HEK293T (cell line): ENCODE measurements at regions of chr6 and their contacts with region 1.

Region 1: DNA sequence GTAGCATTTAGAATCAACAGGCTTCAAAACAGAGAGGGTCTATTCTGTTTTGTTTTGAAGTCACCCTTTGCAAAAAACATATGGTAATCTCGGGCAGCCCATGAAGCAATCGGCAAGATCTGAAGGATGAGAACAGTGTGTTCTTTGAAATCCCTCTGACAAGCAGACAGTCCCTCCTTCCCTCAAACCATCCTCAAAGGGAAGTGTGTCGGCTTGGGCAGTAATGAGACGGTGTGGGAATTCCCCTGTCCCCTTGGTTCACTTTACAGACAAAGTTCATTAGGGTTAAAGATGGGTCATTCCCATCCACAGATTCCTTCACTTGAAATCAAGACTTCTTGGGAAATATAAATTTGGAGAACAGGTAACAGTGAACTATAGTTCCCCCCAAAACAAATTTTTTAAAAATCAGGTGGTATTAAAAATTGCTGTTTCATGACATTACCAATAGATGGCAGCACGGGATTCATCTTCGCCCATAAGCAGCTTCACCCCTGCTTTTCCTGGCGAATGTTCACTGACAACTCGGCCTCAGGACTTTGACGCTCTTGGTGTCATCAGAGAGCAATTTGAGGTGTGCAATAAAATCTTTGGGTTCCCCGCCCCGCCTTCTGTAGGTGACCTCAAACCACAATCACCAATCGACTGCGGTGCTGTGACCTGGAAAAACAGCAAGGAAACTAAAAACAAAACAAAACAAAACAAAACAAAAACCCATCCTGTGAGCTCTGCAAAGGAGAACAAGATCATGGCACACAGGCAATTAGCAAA is 159.3 kb upstream of the TNFAIP3 start:
- DNase-seq: peak; percentile 74

Region 2: GRCh38 chr6:137680705-137681346 is 26.9 kb before region 1 on chr6:
- CTCF ChIA-PET with region 1: no interaction called
- POLR2A ChIA-PET with region 1: no interaction called
- DNase-seq: no peak

Region 3: DNA sequence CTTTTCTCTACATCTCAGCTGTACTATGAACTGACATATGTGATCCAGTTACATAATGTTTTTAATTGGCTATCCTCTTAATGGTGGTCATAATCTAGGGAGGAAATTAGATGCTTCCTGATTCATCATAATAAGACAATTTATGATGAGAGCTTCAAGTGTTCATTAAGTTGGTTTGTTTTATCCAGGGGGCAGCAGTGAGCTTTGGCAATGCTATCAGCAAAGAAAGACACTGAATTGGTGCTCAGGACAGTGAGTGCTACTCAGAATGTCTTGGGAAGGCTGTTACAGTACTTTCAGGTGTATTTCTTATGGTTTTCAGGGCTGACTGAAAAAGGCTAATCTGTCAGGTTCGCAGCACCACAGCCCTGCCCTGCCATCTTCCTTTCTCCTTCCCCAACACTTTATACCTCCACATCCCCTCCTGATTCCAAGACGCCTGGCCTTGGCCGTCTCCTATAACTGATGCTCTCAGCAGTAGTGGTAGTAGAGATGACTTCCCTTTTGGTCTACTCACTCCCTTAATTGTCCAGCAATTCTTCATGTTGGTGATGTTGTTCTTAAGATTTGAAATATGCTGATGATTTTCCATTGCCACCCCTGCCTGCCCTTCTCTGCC is 92.3 kb after region 1 on chr6:
- CTCF ChIA-PET with region 1: interaction called, 12 read pairs
- POLR2A ChIA-PET with region 1: no interaction called
- DNase-seq: peak; percentile 56

Region 4: DNA sequence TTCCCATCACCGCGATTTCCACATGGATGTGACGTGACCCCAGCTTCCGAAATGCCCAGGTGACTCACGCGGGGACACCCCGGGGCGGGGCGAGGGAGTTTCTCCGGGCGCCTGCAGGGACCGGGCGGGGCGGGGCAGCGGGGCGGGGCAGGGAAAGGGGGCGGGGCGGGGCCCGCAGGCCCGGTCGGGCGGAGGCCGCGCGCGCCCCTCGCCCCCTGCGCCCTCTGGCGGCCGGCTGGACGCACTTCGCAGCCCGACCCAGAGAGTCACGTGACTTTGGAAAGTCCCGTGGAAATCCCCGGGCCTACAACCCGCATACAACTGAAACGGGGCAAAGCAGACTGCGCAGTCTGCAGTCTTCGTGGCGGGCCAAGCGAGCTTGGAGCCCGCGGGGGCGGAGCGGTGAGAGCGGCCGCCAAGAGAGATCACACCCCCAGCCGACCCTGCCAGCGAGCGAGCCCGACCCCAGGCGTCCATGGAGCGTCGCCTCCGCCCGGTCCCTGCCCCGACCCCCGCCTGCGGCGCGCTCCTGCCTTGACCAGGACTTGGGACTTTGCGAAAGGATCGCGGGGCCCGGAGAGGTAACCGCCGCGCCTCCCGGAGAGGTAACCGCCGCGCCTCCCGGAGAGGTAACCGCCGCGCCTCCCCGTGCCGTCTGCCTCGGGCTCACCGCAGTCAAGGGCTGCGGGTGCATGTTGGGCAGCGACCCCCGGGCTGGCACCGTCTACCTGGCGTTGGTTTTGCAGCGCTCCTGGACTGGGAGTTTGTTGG is 159.3 kb after region 1 on chr6 and contains the start of gene TNFAIP3:
- CTCF ChIA-PET with region 1: interaction called, 10 read pairs
- POLR2A ChIA-PET with region 1: interaction called, 3 read pairs
- DNase-seq: peak; percentile 97

Region 5: GRCh38 chr6:137944793-137945498 is 237.2 kb after region 1 on chr6:
- CTCF ChIA-PET with region 1: interaction called, 13 read pairs
- POLR2A ChIA-PET with region 1: no interaction called
- DNase-seq: peak; percentile 67